ENCODE measurements at regions of chr12 and their contacts with region 1.

Region 1: DNA sequence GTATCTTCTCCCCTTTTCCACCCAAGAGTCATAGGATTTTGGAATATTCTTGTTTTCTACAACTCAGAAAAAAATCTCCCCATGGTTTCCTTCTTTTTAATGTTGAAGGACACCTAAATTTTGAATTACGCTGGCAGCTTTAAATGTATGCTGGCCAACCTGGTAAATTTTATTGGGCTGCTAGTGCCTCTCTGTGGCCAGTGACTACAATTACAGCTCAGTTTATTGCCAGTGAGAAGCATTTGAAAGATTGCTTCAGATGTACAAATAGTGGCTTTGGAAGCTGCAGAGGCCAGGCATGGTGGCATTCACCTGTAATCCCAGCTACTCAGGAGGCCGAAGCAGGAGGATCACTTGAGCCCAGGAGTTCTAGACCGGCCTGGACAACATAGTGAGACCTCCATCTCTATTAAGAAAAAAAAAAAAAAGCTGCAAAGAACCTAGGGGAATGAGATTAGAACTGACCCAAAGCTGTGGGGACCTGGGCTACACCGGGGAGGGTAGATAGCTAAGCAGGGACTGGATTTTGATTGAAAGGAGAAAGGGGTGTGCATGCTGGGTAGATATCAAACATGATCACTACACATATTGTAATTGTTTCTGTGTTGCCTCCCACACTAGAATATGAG is 7.6 kb upstream of the RAB21 start:
- DNase-seq: peak; percentile 19
- ATAC-seq: peak; percentile 92
- H3K4me3 Mint-ChIP-seq: no peak overlapping the region
- H3K27ac Mint-ChIP-seq: no peak overlapping the region
- H3K4me1 Mint-ChIP-seq: peaks cover 21% of the 10 kb centered on the region
- H3K27me3 Mint-ChIP-seq: no peaks in the 10 kb centered on the region
- CTCF ChIP-seq: peak; percentile 59

Region 2: GRCh38 chr12:71415336-71416231 is 331.5 kb before region 1 on chr12:
- CTCF ChIA-PET with region 1: interaction called, 11 read pairs
- POLR2A ChIA-PET with region 1: no interaction called
- DNase-seq: no peak
- ATAC-seq: peak; percentile 80
- H3K4me3 Mint-ChIP-seq: no peak overlapping the region
- H3K27ac Mint-ChIP-seq: no peak overlapping the region
- H3K4me1 Mint-ChIP-seq: no peaks in the 10 kb centered on the region
- H3K27me3 Mint-ChIP-seq: no peaks in the 10 kb centered on the region
- CTCF ChIP-seq: peak; percentile 50

Region 3: DNA sequence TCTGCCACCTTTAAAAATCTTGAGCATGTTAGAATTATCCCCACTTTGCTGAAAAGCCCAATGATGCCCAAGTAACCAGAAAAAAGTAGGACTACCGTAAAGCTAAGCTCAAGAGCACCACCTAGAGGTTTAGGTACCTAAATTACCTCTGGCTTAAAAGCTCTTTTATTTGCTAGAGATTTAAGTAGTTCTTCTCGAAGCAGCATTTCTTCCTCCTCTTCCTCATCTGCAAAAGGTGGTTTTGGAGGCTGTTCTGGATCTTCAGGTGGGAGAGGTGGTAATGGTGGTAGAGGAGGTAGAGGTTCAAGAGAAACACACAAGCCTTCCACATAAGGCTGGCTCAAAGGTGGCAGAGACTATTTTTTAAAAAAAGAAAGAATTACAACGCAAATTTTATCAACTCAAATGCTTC is 110.4 kb before region 1 on chr12:
- CTCF ChIA-PET with region 1: interaction called, 44 read pairs
- POLR2A ChIA-PET with region 1: no interaction called
- DNase-seq: no peak
- ATAC-seq: peak; percentile 63
- H3K4me3 Mint-ChIP-seq: no peak overlapping the region
- H3K27ac Mint-ChIP-seq: peak overlapping the region; percentile 89
- H3K4me1 Mint-ChIP-seq: no peaks in the 10 kb centered on the region
- H3K27me3 Mint-ChIP-seq: no peaks in the 10 kb centered on the region
- CTCF ChIP-seq: peak; percentile 59

Region 4: DNA sequence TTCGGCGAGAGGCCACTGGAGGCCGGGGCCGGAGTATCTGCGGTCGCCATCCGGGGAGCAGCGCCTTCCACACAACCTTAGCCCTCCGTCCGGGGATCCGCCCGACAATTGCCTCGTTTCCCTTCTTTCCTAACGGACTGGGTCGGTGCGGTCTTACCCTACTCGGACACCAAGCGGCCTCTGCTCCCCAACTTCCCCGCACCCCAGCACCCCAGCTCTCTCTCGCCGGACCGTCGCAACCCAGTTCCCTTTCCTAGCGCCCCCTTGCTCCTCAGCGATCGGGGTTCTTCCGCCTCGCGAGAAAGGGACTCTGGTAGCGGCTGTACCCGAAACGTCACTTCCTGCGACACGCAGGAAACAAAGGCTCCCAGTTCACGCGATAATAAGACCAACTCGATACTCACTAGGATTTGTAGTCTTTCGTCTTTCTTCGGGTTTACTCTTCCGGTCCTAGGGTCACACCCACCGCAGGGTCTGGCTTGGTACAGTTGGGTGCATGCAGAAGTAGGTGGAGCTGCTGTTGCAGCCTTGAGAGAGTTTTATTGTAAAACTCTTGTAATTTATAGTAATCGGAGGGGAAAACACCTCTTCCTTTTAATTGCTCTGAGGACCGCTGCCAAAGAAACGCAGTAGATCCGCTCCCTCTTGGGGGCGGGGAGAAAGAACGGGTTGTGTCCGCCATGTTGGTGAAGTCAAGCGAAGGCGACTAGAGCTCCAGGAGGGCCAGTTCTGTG is 83.4 kb before region 1 on chr12 and contains the start of gene ZFC3H1:
- CTCF ChIA-PET with region 1: interaction called, 30 read pairs
- POLR2A ChIA-PET with region 1: interaction called, 17 read pairs
- DNase-seq: peak; percentile 91
- ATAC-seq: peak; percentile 94
- H3K4me3 Mint-ChIP-seq: peak within 1 kb of the TSS; percentile 91
- H3K27ac Mint-ChIP-seq: peak within 1 kb of the TSS; percentile 100
- H3K4me1 Mint-ChIP-seq: peaks cover 16% of the 10 kb centered on the region
- H3K27me3 Mint-ChIP-seq: no peaks in the 10 kb centered on the region
- CTCF ChIP-seq: no peak
- total RNA-seq, gene ZFC3H1: 28.3 to 33.9 TPM (median 30.9 TPM) in 3 replicates

Region 5: GRCh38 chr12:71685914-71686665 is 61.0 kb before region 1 on chr12 and contains the start of gene TMEM19:
- CTCF ChIA-PET with region 1: interaction called, 41 read pairs
- POLR2A ChIA-PET with region 1: interaction called, 9 read pairs
- DNase-seq: peak; percentile 86
- ATAC-seq: peak; percentile 95
- H3K4me3 Mint-ChIP-seq: peak within 1 kb of the TSS; percentile 95
- H3K27ac Mint-ChIP-seq: peak within 1 kb of the TSS; percentile 99
- H3K4me1 Mint-ChIP-seq: peaks cover 14% of the 10 kb centered on the region
- H3K27me3 Mint-ChIP-seq: no peaks in the 10 kb centered on the region
- CTCF ChIP-seq: no peak
- total RNA-seq, gene TMEM19: 10.7 to 15.6 TPM (median 11.7 TPM) in 3 replicates

Region 6: DNA sequence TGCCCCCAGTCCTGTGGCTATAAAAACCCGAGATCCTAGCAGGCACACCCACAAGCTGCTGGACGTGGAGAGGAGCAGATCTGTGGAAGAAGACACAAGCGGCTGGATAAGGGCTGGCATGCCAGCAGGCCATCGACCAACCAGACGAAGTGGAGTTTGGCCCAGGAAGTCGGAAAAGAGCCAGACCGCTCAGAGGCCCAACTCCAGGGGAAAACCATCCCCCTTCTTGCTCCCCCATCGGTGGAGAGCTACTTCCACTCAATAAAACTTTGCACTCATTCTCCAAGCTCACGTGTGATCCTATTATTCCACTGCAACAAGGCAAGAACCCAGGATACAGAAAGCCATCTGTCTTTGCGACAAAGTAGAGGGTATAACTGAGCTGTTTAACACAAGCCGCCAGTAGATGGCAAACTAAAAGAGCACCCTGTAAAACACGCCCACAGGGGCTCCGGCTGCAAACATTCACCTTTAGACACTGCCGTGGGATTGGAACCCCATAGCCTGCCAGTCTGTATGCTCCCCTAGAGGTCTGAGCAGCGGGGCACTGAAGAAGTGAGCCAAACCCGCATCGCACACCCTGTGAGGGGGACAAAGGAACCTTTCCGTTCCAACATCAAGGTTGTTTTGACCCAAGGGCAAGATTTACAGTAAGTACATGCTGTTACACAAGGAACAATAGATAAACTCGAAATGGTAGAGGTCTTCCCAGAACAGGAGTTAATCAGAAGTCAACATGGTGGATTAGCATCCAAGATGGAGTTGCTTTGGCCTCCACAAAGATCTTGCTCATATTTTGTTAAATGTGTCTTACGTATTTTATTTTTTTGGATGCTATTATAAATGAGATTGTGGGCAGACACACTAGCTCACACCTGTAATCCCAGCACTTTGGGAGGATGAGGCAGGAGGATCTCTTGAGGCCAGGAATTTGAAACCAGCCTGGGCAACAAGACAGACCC is 15.1 kb before region 1 on chr12:
- CTCF ChIA-PET with region 1: interaction called, 25 read pairs
- POLR2A ChIA-PET with region 1: no interaction called
- DNase-seq: peak; percentile 42
- ATAC-seq: peak; percentile 98
- H3K4me3 Mint-ChIP-seq: peak overlapping the region; percentile 22; the same call in 1 of the 2 replicates
- H3K27ac Mint-ChIP-seq: peak overlapping the region; percentile 79; the same call in 1 of the 2 replicates
- H3K4me1 Mint-ChIP-seq: peaks cover 11% of the 10 kb centered on the region
- H3K27me3 Mint-ChIP-seq: no peaks in the 10 kb centered on the region; the same call in 1 of the 2 replicates
- CTCF ChIP-seq: no peak; the same call in 1 of the 2 replicates

Measured in WTC11 (cell line).